IMR-90 (cell line): ENCODE measurements at regions of chr12 and their contacts with region 1.

Region 1: DNA sequence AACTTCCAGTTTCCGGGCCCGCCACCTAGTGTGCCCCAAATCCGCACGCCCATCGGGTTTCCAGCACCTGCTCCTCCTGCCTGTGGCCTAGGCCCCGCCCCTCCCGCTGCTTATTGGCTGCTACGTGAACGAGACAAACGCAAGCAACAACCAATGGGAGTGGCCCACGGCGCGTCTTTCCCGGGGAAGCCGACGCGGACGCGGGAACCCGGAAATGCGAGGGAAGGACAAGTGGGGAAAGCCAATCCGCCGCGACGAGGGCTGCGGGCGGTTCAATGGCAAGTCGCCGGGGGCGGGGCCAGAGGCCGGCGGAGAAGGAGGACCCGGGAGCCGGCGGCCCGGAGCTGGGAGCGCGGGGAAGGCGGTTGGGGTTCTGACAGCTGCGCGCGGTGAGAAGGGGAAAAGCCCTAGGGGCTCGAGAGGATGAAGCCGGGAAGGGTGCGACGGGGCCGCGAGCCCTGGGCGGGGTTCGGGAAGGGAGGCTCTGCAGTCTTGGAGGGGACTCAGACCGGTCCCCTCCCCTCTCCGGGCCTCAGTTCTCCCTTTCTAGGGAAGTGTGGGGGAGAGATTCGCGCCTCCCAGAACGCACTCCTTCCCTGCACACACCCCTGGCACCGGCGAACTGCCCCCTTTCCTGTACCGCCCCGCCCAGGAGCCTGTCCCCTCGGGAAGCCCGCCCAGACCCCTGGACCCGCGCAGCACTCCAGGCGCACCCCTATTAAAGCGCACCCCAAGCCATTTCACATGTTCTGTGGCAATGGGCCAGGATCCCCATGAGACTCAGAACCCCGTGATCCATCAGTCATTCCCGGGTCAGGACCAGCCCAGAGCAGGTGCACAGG is at the start of gene FICD:
- DNase-seq: peak; percentile 96
- ATAC-seq: peak; percentile 97
- H3K4me3 ChIP-seq: peak within 1 kb of the TSS; percentile 74
- H3K27ac ChIP-seq: peak within 1 kb of the TSS; percentile 41; the same call in 1 of the 2 replicates
- H3K4me1 ChIP-seq: peaks cover 3% of the 10 kb centered on the region
- H3K27me3 ChIP-seq: no peaks in the 10 kb centered on the region; the same call in 1 of the 2 replicates
- CTCF ChIP-seq: no peak
- POLR2A ChIP-seq: peak; percentile 77
- RAD21 ChIP-seq: no peak
- total RNA-seq, gene FICD: 10.8 and 11.3 TPM in 2 replicates

Region 2: DNA sequence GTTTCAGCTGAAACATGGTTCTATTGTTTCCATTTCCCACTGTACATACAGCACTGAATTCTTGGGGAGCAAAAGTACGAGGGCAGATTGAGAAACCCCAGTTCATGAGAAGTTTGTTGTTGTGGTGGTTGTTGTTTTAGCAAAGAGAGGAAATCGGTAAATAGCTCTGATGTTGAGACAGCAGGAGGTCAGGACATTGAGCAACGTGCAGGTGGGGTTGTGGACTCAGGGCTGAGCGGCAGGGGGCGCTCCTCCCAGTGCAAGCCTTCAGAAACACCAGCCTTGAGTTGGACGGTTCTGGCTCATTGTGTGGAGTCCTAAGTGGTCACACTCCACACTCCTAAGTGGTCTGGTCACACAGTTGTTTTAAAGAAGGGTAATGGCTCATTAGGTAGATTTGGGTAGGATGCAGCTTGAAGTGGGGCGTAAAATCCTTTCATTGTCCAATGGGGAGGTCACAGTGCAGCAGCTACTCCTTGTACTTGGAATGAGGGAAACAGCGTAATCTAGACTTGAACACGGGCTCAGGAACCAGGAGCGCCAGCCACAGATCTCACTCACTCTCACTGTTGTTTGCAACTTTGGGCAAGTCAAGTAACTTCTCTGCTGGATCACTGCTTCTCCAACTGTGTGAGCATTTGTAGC is 844.1 kb before region 1 on chr12:
- CTCF ChIA-PET with region 1: no interaction called
- POLR2A ChIA-PET with region 1: no interaction called
- dilution Hi-C with region 1: no loop called
- in situ Hi-C with region 1: loop called (anchors 25 kb)
- intact Hi-C with region 1: loop called (anchors 1 kb)
- DNase-seq: peak; percentile 7
- ATAC-seq: no peak
- H3K4me3 ChIP-seq: no peak overlapping the region
- H3K27ac ChIP-seq: no peak overlapping the region
- H3K4me1 ChIP-seq: no peaks in the 10 kb centered on the region
- H3K27me3 ChIP-seq: peaks cover 37% of the 10 kb centered on the region
- CTCF ChIP-seq: peak; percentile 44
- POLR2A ChIP-seq: no peak
- RAD21 ChIP-seq: no peak

Region 3: DNA sequence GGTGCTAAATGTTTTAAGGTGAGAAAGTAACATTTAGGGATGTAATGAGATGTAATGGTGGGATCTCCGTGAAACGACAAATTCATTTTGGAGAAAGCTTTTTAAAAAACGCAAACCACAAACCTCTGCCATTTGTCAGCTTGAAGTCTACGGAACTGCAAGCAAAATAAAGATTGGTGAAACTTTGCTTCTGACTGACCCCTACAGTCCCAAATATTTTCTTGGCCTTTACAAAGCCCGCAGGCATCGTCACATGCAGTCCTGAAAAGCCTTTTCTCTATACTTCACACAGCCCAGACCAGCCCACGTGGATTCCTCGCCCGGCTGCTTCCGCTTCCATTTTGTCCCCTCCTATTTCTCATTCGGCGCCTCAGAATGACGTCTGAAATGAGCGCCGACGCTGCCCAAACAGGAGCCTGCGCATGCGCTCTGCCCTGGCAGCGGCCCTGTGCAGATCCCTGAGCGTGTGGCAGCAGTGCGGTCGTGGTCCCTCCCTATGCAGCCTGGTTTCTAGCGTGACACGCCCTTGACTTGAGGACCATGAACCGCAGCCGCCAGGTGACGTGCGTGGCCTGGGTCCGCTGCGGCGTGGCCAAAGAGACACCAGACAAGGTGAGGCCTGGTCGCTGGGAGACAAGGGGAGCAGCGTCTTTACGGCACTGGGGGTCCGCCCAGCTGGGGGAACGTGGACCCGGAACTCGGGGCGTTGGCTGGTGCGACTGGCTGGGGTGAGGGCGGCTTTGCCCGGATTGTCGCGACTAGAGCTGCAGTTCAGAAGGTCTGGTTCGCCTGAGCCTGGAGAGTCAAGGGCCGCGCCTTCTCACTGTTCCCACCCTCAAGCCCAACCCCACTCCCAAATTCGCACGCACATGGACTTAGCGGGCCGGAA is 829.6 kb before region 1 on chr12 and contains the start of gene PWP1:
- CTCF ChIA-PET with region 1: no interaction called
- POLR2A ChIA-PET with region 1: no interaction called
- dilution Hi-C with region 1: no loop called
- in situ Hi-C with region 1: loop called (anchors 25 kb)
- intact Hi-C with region 1: no loop called
- DNase-seq: peak; percentile 94
- ATAC-seq: peak; percentile 93
- H3K4me3 ChIP-seq: peak within 1 kb of the TSS; percentile 94
- H3K27ac ChIP-seq: peak within 1 kb of the TSS; percentile 97
- H3K4me1 ChIP-seq: 0 out of 2 replicates have a peak, but pooled peaks cover 2% of the 10 kb centered on the region
- H3K27me3 ChIP-seq: no peaks in the 10 kb centered on the region
- CTCF ChIP-seq: no peak
- POLR2A ChIP-seq: peak; percentile 84
- RAD21 ChIP-seq: no peak
- total RNA-seq, gene PWP1: 179 and 341 TPM in 2 replicates

Region 4: GRCh38 chr12:107884769-107885694 is 630.2 kb before region 1 on chr12:
- CTCF ChIA-PET with region 1: no interaction called
- POLR2A ChIA-PET with region 1: no interaction called
- dilution Hi-C with region 1: no loop called
- in situ Hi-C with region 1: no loop called
- intact Hi-C with region 1: loop called (anchors 5 kb)
- DNase-seq: peak; percentile 49
- ATAC-seq: peak; percentile 93
- H3K4me3 ChIP-seq: no peak overlapping the region
- H3K27ac ChIP-seq: no peak overlapping the region
- H3K4me1 ChIP-seq: no peaks in the 10 kb centered on the region
- H3K27me3 ChIP-seq: no peaks in the 10 kb centered on the region
- CTCF ChIP-seq: peak; percentile 84
- POLR2A ChIP-seq: 0 out of 2 replicates have a peak, but pooled peaks have one; percentile 30
- RAD21 ChIP-seq: peak; percentile 81

Region 5: DNA sequence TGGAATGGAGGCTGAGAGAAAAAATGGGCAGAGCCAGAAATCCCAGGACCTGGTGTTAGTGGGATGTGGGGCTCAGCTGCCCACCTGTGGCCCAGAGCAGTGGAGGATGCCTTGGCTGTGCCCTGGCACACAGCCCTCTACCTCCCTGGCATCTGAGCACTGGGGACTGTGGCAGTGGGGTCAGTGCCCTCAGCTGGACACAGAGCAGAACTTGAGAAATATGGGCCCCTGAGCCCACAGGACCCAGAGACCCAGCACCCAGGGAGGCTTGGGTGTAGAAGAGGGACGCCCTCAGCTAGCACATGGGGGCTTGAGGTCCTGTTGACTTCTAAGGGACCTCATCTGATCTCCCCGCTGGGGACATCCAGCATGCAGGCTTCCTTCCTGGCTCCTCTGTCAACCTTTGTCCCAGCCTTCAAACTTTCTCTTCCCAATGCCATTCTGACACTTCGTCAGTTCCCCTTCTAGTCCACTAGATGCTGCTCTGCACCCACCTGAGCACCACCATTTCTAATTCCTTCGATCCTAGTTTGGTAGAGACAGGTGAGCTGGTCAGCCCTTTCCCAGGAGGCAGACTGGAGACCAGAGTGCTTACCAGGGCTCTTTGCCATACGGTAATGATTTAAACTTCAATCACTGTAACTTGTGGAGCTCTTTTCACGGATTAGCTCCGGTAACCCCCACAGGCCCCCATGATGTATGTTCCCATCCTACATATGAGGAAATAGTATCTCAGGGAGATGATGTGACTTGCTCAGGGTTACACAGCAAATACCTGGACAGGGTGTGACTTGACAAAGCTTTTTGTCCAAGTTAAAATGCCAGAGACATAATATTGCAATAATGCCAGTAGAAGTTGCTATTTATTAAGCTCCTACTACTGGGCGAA is 597.0 kb before region 1 on chr12:
- CTCF ChIA-PET with region 1: no interaction called
- POLR2A ChIA-PET with region 1: no interaction called
- dilution Hi-C with region 1: no loop called
- in situ Hi-C with region 1: no loop called
- intact Hi-C with region 1: loop called (anchors 1 kb)
- DNase-seq: peak; percentile 5
- ATAC-seq: peak; percentile 54
- H3K4me3 ChIP-seq: no peak overlapping the region
- H3K27ac ChIP-seq: no peak overlapping the region
- H3K4me1 ChIP-seq: no peaks in the 10 kb centered on the region
- H3K27me3 ChIP-seq: no peaks in the 10 kb centered on the region
- CTCF ChIP-seq: peak; percentile 46
- POLR2A ChIP-seq: no peak
- RAD21 ChIP-seq: peak; percentile 60

Region 6: DNA sequence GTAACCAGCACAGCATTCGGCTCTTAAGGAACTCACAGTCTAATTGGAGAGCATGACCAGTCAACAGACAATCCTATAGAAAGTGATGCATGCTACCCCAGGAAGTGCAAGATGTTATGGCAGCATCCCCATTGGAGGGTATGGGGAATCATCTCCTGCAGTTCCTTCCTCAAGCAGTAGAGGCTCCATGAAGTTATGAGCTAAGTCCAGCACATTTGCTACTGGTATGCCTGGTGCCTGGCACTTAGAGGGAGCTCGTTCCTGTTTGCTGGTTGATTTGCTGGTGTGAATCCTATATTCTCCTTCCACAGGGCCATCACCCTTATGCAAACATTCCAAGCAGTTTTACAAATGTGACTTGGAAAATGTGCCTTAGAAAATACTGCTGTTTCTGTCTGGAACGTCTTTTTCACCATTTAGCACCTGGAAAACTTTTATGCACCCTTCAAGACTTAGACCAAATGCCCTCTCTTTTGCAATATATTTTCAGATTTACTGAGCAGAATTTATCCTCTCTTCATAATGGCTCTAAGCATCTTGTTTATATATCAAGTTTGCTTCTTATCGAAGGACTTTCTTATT is 522.2 kb before region 1 on chr12:
- CTCF ChIA-PET with region 1: interaction called, 3 read pairs
- POLR2A ChIA-PET with region 1: no interaction called
- dilution Hi-C with region 1: no loop called
- in situ Hi-C with region 1: no loop called
- intact Hi-C with region 1: loop called (anchors 5 kb)
- DNase-seq: peak; percentile 18
- ATAC-seq: no peak; the same call in 1 of the 2 replicates
- H3K4me3 ChIP-seq: no peak overlapping the region
- H3K27ac ChIP-seq: no peak overlapping the region
- H3K4me1 ChIP-seq: no peaks in the 10 kb centered on the region
- H3K27me3 ChIP-seq: no peaks in the 10 kb centered on the region
- CTCF ChIP-seq: peak; percentile 25; the same call in 1 of the 2 replicates
- POLR2A ChIP-seq: no peak
- RAD21 ChIP-seq: no peak